ENCODE measurements at regions of chr1 and their contacts with region 1.

Region 1: GRCh38 chr1:42319128-42319851 is 15.7 kb downstream of the FOXJ3 start:
- DNase-seq: no peak
- H3K4me3 ChIP-seq: no peak overlapping the region
- H3K4me3 Mint-ChIP-seq: no peak overlapping the region
- H3K27ac Mint-ChIP-seq: no peak overlapping the region
- H3K4me1 ChIP-seq: peaks cover 17% of the 10 kb centered on the region; the same call in 1 of the 2 replicates
- H3K4me1 Mint-ChIP-seq: peaks cover 33% of the 10 kb centered on the region
- H3K27me3 ChIP-seq: no peaks in the 10 kb centered on the region
- H3K27me3 Mint-ChIP-seq: no peaks in the 10 kb centered on the region
- CTCF ChIP-seq: no peak

Region 2: DNA sequence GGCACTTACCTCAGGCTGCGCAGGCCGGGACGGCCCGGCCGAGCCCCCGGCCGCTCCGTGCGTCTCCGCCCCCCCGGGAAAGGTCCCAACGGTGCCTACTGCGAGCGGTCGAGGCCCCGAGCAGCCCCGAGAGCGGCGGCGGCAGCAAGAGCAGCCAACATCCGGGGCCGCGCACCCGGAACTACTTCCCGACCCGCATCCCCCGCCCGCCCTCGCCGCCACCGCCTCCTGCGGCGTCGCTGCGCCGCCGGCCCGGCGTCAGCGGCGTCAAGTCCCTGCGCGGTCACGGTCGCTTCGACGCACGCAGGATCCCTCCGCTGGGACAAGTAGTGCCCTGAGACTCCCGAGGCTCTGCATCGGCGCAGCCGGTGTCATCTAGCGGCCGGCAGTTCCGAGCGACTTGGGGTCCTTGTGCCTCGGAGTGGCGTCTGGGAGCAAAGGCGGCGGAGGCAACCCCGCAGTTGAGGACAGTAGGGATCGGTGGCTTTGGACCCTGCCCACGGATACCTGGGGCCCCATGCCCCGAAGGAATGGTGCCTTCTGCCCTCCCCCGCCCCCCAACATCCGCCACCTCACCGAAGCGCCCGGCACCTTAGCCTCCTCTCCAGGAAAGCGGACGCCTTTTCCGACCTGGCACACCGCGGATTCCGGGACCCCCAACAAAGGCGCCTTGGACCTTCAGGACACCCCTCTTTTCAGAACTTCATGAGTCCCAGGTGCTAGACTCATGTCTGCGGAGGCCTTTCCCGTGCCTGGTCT is 15.9 kb after region 1 on chr1 and contains the start of gene FOXJ3:
- CTCF ChIA-PET with region 1: no interaction called
- POLR2A ChIA-PET with region 1: no interaction called
- intact Hi-C with region 1: no loop called
- DNase-seq: peak; percentile 92 to 93
- H3K4me3 ChIP-seq: peak within 1 kb of the TSS; percentile 88
- H3K4me3 Mint-ChIP-seq: peak within 1 kb of the TSS; percentile 93
- H3K27ac Mint-ChIP-seq: peak within 1 kb of the TSS; percentile 96
- H3K4me1 ChIP-seq: peaks cover 32% of the 10 kb centered on the region
- H3K4me1 Mint-ChIP-seq: peaks cover 53% of the 10 kb centered on the region
- H3K27me3 ChIP-seq: no peaks in the 10 kb centered on the region
- H3K27me3 Mint-ChIP-seq: no peaks in the 10 kb centered on the region
- CTCF ChIP-seq: no peak
- total RNA-seq, gene FOXJ3: 60.2 and 66.7 TPM in 2 replicates

Region 3: GRCh38 chr1:42462828-42463763 is 143.8 kb after region 1 on chr1 and contains the start of gene CCDC30:
- CTCF ChIA-PET with region 1: no interaction called
- POLR2A ChIA-PET with region 1: no interaction called
- intact Hi-C with region 1: loop called (anchors 5 kb)
- DNase-seq: peak; percentile 95 to 96
- H3K4me3 ChIP-seq: peak within 1 kb of the TSS; percentile 38
- H3K4me3 Mint-ChIP-seq: peak within 1 kb of the TSS; percentile 72
- H3K27ac Mint-ChIP-seq: peak within 1 kb of the TSS; percentile 81
- H3K4me1 ChIP-seq: peaks cover 14% of the 10 kb centered on the region; the same call in 1 of the 2 replicates
- H3K4me1 Mint-ChIP-seq: peaks cover 21% of the 10 kb centered on the region
- H3K27me3 ChIP-seq: no peaks in the 10 kb centered on the region
- H3K27me3 Mint-ChIP-seq: no peaks in the 10 kb centered on the region
- CTCF ChIP-seq: no peak
- total RNA-seq, gene CCDC30: 1.3 and 1.4 TPM in 2 replicates

Measured in Caco-2 (cell line).